Gastrocnemius medialis (tissue), 4 donors: ENCODE measurements at regions of chr20 and their contacts with region 1.

Region 1: GRCh38 chr20:47546184-47547033 is 44.7 kb downstream of the NCOA3 start:
- DNase-seq: no peak
- ATAC-seq: no peak
- H3K4me3 ChIP-seq: no peak overlapping the region
- H3K27ac ChIP-seq: peak overlapping the region in 2 of 4 donors; percentile 1 to 43
- H3K4me1 ChIP-seq: peaks cover 17 to 40% of the 10 kb centered on the region in 2 donors
- H3K27me3 ChIP-seq: no peaks in the 10 kb centered on the region
- CTCF ChIP-seq: no peak
- POLR2A ChIP-seq: no peak

Region 2: DNA sequence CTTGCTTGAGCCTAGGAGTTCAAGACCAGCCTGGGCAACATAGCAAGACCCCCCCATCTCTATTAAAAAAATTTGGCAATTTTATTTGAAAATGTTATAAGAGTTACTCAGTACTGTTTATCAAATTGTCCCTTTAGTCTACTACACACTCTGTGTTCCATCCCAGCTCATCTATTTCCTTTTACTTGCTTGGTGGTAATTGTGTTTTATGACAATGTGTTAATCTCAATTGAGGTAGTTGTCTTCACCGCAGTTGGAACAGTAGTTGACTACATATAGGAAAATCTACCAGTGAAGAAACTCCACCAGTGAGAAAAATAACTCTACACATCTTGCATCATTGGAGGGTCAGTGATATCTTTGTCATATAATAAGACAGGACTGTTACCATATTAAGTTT is 36.7 kb before region 1 on chr20:
- in situ Hi-C with region 1: no loop called
- intact Hi-C with region 1: loop called (anchors 5 kb)
- DNase-seq: no peak
- ATAC-seq: no peak
- H3K4me3 ChIP-seq: no peak overlapping the region
- H3K27ac ChIP-seq: no peak overlapping the region
- H3K4me1 ChIP-seq: peaks cover 20 to 34% of the 10 kb centered on the region in 2 donors
- H3K27me3 ChIP-seq: no peaks in the 10 kb centered on the region
- CTCF ChIP-seq: no peak
- POLR2A ChIP-seq: no peak